Thyroid gland (tissue), 4 donors: ENCODE measurements at regions of chr16 and their contacts with region 1.

Region 1: GRCh38 chr16:81723098-81723723 is 55.9 kb upstream of the PLCG2 start:
- DNase-seq: peak; percentile 27 to 35
- H3K4me3 ChIP-seq: no peak overlapping the region
- H3K27ac ChIP-seq: no peak overlapping the region
- H3K4me1 ChIP-seq: no peaks in the 10 kb centered on the region
- H3K27me3 ChIP-seq: no peaks in the 10 kb centered on the region
- CTCF ChIP-seq: peak; percentile 39 to 89 (median 75)
- POLR2A ChIP-seq: no peak

Region 2: DNA sequence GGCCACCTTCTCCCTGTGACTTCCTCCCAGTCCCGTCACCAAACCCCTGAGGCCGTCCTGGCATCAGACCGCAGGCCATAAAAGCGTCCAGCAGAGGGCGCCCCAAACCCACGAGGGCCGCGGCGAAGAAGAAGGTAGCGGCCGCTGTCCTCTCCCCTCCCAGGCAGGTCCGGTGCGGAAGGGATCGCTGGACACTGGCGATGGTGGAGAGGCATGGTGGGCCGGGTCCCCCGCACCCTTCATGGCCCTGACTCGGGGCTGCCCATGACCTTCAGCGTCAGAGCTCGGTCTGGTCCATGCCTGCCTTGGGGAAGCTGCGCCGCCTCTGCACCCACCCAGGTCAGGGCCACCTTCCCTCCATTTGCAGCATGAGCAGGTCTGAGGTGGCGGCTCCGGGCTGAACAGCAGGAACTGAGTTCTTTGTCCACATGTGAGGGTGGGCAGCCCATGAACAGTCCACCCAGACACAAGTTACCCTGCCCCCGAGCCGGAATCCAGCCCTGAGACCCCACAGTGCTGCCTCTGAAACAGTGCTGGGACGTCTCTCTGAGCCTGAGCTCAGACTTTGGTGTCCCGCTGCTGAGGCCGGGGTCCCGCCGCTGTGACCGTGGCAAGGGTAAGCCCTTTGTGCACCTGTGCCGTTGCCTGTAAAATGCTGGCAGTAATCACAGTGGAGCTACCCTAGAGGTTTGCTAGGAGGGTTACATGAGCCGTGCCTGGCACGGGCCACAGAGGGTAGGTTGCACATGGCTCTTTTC is 319.4 kb before region 1 on chr16:
- intact Hi-C with region 1: loop called (anchors 5 kb)
- DNase-seq: peak; percentile 82 to 86
- H3K4me3 ChIP-seq: no peak overlapping the region
- H3K27ac ChIP-seq: no peak overlapping the region
- H3K4me1 ChIP-seq: peaks cover 4 to 7% of the 10 kb centered on the region in 2 donors
- H3K27me3 ChIP-seq: no peaks in the 10 kb centered on the region
- CTCF ChIP-seq: peak; percentile 87 to 98 (median 94)
- POLR2A ChIP-seq: no peak